CD4-positive, alpha-beta memory T cell (primary cell): ENCODE measurements at regions of chr1 and their contacts with region 1.

Region 1: GRCh38 chr1:9004700-9005394 is 21.4 kb downstream of the SLC2A7 start:
- DNase-seq: peak; percentile 60 to 74 (median 68)
- H3K4me3 ChIP-seq: no peak overlapping the region
- H3K4me3 Mint-ChIP-seq: peak overlapping the region in 3 of 8 donors; percentile 21 to 54 (median 31)
- H3K27ac ChIP-seq: no peak overlapping the region
- H3K27ac Mint-ChIP-seq: peak overlapping the region in 1 of 7 donors; percentile 23
- H3K4me1 ChIP-seq: peaks cover 8% of the 10 kb centered on the region
- H3K4me1 Mint-ChIP-seq: peaks cover 0 to 6% (median 3%) of the 10 kb centered on the region in 4 donors
- H3K27me3 ChIP-seq: no peaks in the 10 kb centered on the region
- H3K27me3 Mint-ChIP-seq: no peaks in the 10 kb centered on the region

Region 2: GRCh38 chr1:8858888-8859706 is 145.8 kb before region 1 on chr1:
- CTCF ChIA-PET with region 1: interaction called, 17 read pairs
- POLR2A ChIA-PET with region 1: no interaction called
- intact Hi-C with region 1: loop called (anchors 1 kb)
- DNase-seq: peak; percentile 50 to 58 (median 55)
- H3K4me3 ChIP-seq: no peak overlapping the region
- H3K4me3 Mint-ChIP-seq: peak overlapping the region in 5 of 8 donors; percentile 2 to 43 (median 6)
- H3K27ac ChIP-seq: no peak overlapping the region
- H3K27ac Mint-ChIP-seq: peak overlapping the region; percentile 64 to 91 (median 76)
- H3K4me1 ChIP-seq: peaks cover 10% of the 10 kb centered on the region
- H3K4me1 Mint-ChIP-seq: peaks cover 10 to 32% (median 20%) of the 10 kb centered on the region in 4 donors
- H3K27me3 ChIP-seq: no peaks in the 10 kb centered on the region
- H3K27me3 Mint-ChIP-seq: no peaks in the 10 kb centered on the region

Region 3: GRCh38 chr1:8941906-8942305 is 62.9 kb before region 1 on chr1:
- CTCF ChIA-PET with region 1: interaction called, 10 read pairs
- POLR2A ChIA-PET with region 1: no interaction called
- intact Hi-C with region 1: no loop called
- DNase-seq: no peak
- H3K4me3 ChIP-seq: no peak overlapping the region
- H3K4me3 Mint-ChIP-seq: no peak overlapping the region
- H3K27ac ChIP-seq: no peak overlapping the region
- H3K27ac Mint-ChIP-seq: no peak overlapping the region
- H3K4me1 ChIP-seq: peaks cover 55% of the 10 kb centered on the region
- H3K4me1 Mint-ChIP-seq: peaks cover 34 to 66% (median 48%) of the 10 kb centered on the region in 4 donors
- H3K27me3 ChIP-seq: no peaks in the 10 kb centered on the region
- H3K27me3 Mint-ChIP-seq: no peaks in the 10 kb centered on the region

Region 4: GRCh38 chr1:8970870-8971337 is 33.9 kb before region 1 on chr1:
- CTCF ChIA-PET with region 1: interaction called, 19 read pairs
- POLR2A ChIA-PET with region 1: no interaction called
- intact Hi-C with region 1: no loop called
- DNase-seq: peak; percentile 59 to 74 (median 66)
- H3K4me3 ChIP-seq: peak overlapping the region; percentile 14 to 19
- H3K4me3 Mint-ChIP-seq: peak overlapping the region; percentile 83 to 96 (median 92)
- H3K27ac ChIP-seq: peak overlapping the region; percentile 45
- H3K27ac Mint-ChIP-seq: peak overlapping the region; percentile 73 to 97 (median 93)
- H3K4me1 ChIP-seq: peaks cover 31% of the 10 kb centered on the region
- H3K4me1 Mint-ChIP-seq: peaks cover 27 to 68% (median 39%) of the 10 kb centered on the region in 4 donors
- H3K27me3 ChIP-seq: no peaks in the 10 kb centered on the region
- H3K27me3 Mint-ChIP-seq: no peaks in the 10 kb centered on the region

Region 5: GRCh38 chr1:8992936-8993687 is 11.7 kb before region 1 on chr1:
- CTCF ChIA-PET with region 1: interaction called, 70 read pairs
- POLR2A ChIA-PET with region 1: no interaction called
- intact Hi-C with region 1: no loop called
- DNase-seq: no peak
- H3K4me3 ChIP-seq: no peak overlapping the region
- H3K4me3 Mint-ChIP-seq: no peak overlapping the region
- H3K27ac ChIP-seq: no peak overlapping the region
- H3K27ac Mint-ChIP-seq: no peak overlapping the region
- H3K4me1 ChIP-seq: peaks cover 3% of the 10 kb centered on the region
- H3K4me1 Mint-ChIP-seq: peaks cover under 1 to 2% (median 1%) of the 10 kb centered on the region in 4 donors
- H3K27me3 ChIP-seq: no peaks in the 10 kb centered on the region
- H3K27me3 Mint-ChIP-seq: peaks cover 0 to 2% of the 10 kb centered on the region in 2 donors